Left cardiac atrium (tissue), 4 donors: ENCODE measurements at regions of chr17 and their contacts with region 1.

Region 1: GRCh38 chr17:72804949-72805707 is 287.4 kb downstream of the SLC39A11 start:
- DNase-seq: no peak
- ATAC-seq: no peak

Region 2: DNA sequence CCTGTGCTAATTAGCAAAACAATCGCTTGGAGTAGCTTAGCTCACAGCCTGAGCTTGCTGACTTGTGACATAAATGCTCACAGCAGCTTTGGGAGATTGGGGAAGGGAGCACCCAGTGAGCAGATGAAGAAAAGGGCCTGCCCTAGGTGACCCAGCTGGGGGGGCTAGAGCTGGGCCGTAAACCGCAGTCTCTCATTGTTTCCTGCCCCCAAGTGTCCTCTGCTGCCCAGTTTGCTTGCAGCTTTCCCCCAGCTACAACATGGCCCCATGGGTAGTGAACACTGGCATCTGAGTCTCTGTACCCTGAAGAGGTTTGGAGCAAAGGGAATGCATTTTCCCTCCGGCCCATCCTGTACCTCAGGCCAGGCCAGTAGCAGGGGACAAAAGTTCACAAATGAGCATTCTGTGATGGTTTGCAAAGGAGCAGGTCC is 62.1 kb before region 1 on chr17:
- intact Hi-C with region 1: no loop called
- DNase-seq: no peak
- ATAC-seq: no peak

Region 3: GRCh38 chr17:72863526-72864211 is 58.5 kb after region 1 on chr17:
- intact Hi-C with region 1: loop called in 1 of 2 experiments (anchors 10 kb)
- DNase-seq: no peak
- ATAC-seq: no peak